ENCODE measurements at regions of chr20 and their contacts with region 1.

Region 1: GRCh38 chr20:23637282-23638221 is at the start of gene CST3:
- DNase-seq: peak; percentile 83
- H3K4me3 ChIP-seq: peak within 1 kb of the TSS; percentile 74 to 96
- H3K27ac ChIP-seq: peak within 1 kb of the TSS; percentile 80 to 89
- H3K4me1 ChIP-seq: peaks cover 9% of the 10 kb centered on the region
- H3K27me3 ChIP-seq: no peaks in the 10 kb centered on the region
- CTCF ChIP-seq: no peak
- POLR2A ChIP-seq: peak; percentile 75
- total RNA-seq, gene CST3: 1,170 to 3,384 TPM

Region 2: GRCh38 chr20:23034721-23035671 is 602.6 kb before region 1 on chr20 and contains the start of gene SSTR4:
- intact Hi-C with region 1: no loop called
- DNase-seq: no peak
- H3K4me3 ChIP-seq: no peak within 1 kb of the TSS
- H3K27ac ChIP-seq: no peak within 1 kb of the TSS
- H3K4me1 ChIP-seq: no peaks in the 10 kb centered on the region
- H3K27me3 ChIP-seq: peaks cover 22% of the 10 kb centered on the region
- CTCF ChIP-seq: no peak
- POLR2A ChIP-seq: no peak
- total RNA-seq, gene SSTR4: not detected

Region 3: DNA sequence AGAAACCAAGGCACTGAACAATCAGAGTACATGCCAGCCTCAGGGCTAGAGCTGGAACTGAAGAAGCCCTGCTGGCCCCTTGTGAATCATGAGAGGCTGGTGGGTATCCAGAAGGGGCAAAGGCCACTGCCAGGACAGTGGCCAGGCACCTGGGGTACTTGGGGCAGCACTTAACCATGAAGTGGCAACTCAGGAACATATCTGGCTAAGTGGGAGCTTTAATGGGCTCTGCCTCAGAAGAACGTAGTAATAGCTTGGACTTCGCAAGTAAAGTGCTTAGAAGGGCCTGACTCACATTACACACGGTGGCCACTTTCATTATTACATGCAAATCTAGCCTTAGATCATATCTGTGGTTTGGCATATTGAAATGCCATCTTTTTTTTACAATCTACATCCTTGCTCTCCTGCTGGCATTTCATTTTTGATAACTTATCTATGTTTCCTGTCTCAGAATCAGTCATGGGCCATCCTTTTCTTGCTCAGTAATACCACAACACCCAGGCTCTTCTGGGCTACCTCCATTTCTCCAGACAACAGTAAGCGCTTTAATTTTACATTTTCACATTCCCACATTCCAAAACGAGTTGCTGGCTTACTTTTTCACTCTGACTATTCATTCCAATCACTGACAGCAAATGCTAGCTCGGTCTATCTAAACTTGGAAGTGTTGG is 237.8 kb before region 1 on chr20:
- intact Hi-C with region 1: no loop called
- DNase-seq: no peak
- H3K4me3 ChIP-seq: no peak overlapping the region
- H3K27ac ChIP-seq: no peak overlapping the region
- H3K4me1 ChIP-seq: no peaks in the 10 kb centered on the region
- H3K27me3 ChIP-seq: no peaks in the 10 kb centered on the region
- CTCF ChIP-seq: peak in 1 of 4 experiments; percentile 8
- POLR2A ChIP-seq: no peak

Region 4: DNA sequence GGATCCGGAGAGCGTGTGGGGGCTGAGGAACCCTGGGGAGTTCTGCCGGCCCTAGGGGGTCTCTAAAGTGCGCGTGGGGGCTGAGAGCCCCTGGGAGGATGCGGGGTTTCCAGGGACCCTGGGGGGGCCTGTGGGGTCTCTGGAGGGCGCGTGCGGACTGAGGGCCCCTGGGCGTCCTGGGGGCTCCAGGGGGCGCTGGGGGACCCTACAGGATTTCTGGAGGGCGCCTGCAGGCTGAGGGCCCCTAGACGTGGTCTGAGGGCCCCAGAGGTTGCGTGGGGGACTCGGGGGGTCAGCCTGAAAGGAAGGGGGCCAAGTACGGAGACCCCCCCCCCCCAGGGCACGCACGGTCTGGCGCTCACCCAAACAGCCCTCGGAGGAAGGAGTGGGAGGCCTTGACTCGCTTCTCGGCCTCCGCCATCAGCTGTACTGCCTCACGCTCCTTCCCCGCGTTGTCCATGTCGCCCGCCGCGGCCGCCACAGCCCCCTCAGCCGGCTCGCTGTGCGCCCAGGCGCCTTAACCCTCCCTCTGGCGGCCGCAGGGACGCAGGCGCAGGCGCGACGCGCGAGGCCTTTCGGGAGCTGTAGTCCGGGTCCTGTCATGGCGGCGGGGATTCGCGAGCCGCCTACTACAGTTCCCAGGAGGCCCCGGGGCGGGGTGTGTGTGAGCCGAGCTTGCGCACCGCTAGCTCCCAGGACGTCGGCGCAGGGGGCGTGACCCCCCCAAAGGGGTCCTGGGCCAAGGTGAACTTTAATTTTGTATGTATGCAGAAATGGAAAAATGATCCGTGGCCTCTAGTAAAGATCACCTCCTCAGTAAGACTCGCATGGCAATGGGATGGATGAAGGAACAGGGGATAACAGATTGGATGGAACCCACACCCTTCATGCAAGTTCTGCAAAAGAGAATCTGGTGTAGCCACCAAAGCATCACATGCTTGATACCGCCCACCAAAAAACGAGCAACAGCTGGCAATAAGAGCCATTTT is 216.3 kb before region 1 on chr20 and contains the start of gene NAPB:
- intact Hi-C with region 1: loop called (anchors 10 kb)
- DNase-seq: peak; percentile 93
- H3K4me3 ChIP-seq: peak within 1 kb of the TSS; percentile 83 to 86
- H3K27ac ChIP-seq: peak within 1 kb of the TSS; percentile 85 to 86
- H3K4me1 ChIP-seq: peaks cover 4% of the 10 kb centered on the region
- H3K27me3 ChIP-seq: no peaks in the 10 kb centered on the region
- CTCF ChIP-seq: peak; percentile 35 to 92 (median 62)
- POLR2A ChIP-seq: peak; percentile 95
- total RNA-seq, gene NAPB: 8.1 to 24.3 TPM

Region 5: DNA sequence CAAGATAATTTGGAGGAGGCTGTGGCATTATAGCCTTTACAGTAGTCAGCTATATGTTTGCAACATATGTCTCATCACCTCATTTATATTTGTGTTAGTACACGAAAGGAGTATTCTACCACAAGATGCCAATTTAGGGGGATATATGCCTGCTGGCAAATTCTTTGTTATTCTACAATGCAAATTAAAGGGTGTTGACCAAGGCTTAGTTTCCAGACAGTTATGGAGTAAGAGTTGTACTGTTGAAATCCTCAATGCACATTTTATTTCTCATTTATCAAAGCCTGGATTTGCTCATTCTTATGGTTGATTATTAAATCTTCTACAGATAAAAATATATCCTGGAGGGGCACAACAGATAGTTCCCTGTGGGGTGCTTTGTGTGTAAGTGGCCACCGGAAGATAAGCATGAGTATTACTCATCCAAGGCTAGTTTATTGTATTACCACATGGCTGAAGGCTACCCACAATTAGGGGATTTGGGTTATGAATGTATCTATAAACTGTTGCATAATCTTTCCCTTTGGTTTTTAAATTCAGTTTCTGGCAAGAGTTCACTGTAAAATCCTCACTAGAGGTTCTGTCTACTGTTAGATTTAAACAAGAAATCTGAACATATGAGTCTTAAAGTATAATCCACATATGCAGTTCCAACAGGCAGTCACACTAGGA is 40.8 kb before region 1 on chr20:
- intact Hi-C with region 1: no loop called
- DNase-seq: no peak
- H3K4me3 ChIP-seq: no peak overlapping the region
- H3K27ac ChIP-seq: no peak overlapping the region
- H3K4me1 ChIP-seq: no peaks in the 10 kb centered on the region
- H3K27me3 ChIP-seq: no peaks in the 10 kb centered on the region
- CTCF ChIP-seq: no peak
- POLR2A ChIP-seq: no peak